ENCODE measurements at regions of chr7 and their contacts with region 1.

Region 1: GRCh38 chr7:129635300-129636029 is 23.9 kb downstream of the NRF1 start:
- DNase-seq: peak; percentile 46 to 62
- H3K4me3 ChIP-seq: no peak overlapping the region
- H3K27ac ChIP-seq: 0 out of 2 replicates have a peak overlapping the region, but pooled peaks have one; percentile 4
- H3K4me1 ChIP-seq: no peaks in the 10 kb centered on the region
- H3K27me3 ChIP-seq: no peaks in the 10 kb centered on the region
- CTCF ChIP-seq: peak; percentile 81

Region 2: DNA sequence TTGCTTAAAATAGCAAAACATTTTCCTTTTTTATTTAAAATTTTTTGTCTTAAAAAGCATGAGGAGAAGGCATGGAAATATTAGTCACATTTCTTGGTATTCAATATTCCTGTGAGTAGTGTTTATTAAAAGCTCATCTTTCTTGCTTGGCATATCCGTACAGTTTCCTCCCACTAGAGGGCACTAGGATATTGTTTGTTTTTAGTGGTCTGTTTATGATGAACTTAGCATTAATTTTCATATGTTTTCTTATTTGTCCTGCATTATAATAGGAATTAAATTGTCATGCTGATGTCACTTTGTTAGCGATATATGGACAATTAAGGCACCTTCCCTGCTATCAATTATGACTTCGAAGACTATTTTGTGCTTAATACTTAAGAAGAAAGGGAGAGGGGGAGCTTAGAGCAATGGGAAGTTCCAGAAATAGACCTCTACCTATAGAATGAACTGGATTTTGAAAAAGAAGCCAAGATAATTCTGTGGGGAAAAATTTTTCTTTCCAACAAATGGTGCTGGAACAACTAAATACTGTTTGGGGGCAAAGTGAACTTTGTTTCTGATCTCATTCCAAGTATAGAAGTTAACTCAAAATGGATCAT is 292.3 kb before region 1 on chr7:
- CTCF ChIA-PET with region 1: no interaction called
- POLR2A ChIA-PET with region 1: no interaction called
- intact Hi-C with region 1: loop called (anchors 1 kb)
- DNase-seq: peak; percentile 9 to 52
- H3K4me3 ChIP-seq: no peak overlapping the region
- H3K27ac ChIP-seq: no peak overlapping the region
- H3K4me1 ChIP-seq: peaks cover 8% of the 10 kb centered on the region
- H3K27me3 ChIP-seq: no peaks in the 10 kb centered on the region
- CTCF ChIP-seq: peak; percentile 85

Region 3: GRCh38 chr7:129388333-129389098 is 246.9 kb before region 1 on chr7:
- CTCF ChIA-PET with region 1: interaction called, 10 read pairs
- POLR2A ChIA-PET with region 1: no interaction called
- intact Hi-C with region 1: no loop called
- DNase-seq: no peak
- H3K4me3 ChIP-seq: no peak overlapping the region
- H3K27ac ChIP-seq: no peak overlapping the region
- H3K4me1 ChIP-seq: no peaks in the 10 kb centered on the region
- H3K27me3 ChIP-seq: no peaks in the 10 kb centered on the region
- CTCF ChIP-seq: no peak

Region 4: GRCh38 chr7:130831817-130832481 is 1196.5 kb after region 1 on chr7:
- CTCF ChIA-PET with region 1: no interaction called
- POLR2A ChIA-PET with region 1: no interaction called
- intact Hi-C with region 1: loop called (anchors 10 kb)
- DNase-seq: peak in 1 of 2 experiments; percentile 58
- H3K4me3 ChIP-seq: no peak overlapping the region
- H3K27ac ChIP-seq: no peak overlapping the region
- H3K4me1 ChIP-seq: no peaks in the 10 kb centered on the region
- H3K27me3 ChIP-seq: no peaks in the 10 kb centered on the region
- CTCF ChIP-seq: peak; percentile 95